Posterior vena cava (tissue), 2 donors: ENCODE measurements at regions of chr7 and their contacts with region 1.

Region 1: DNA sequence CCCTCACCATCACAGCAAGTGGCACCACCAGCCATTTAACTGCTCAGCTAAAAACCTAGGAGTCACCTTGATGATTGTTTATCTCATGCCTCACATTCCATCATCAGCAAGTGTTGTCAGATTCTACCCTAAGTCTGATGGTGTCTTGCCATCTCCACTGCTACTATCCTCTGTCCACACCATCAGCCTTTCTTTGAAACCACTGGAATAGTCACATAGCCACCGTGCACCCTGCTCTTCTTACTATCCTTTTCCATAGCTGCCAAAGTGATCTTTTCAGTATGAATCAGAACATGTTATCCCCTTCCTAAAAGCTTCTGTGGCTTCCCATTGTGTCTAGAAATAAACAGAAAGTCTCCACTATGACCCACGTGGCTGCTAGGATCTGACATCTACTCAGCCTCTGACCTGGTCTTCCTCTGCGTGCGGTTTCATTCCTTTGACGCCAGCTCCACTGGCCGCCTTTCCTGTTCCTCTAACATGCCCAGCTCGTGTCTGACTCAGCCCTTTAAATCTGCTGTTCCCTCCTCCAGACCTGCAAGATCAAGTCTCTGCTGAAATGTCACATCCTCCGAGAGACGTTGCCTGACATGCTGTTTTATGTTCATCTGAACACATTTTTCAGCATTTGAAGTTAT is 16.5 kb upstream of the CHN2 start:
- DNase-seq: peak; percentile 86

Region 2: DNA sequence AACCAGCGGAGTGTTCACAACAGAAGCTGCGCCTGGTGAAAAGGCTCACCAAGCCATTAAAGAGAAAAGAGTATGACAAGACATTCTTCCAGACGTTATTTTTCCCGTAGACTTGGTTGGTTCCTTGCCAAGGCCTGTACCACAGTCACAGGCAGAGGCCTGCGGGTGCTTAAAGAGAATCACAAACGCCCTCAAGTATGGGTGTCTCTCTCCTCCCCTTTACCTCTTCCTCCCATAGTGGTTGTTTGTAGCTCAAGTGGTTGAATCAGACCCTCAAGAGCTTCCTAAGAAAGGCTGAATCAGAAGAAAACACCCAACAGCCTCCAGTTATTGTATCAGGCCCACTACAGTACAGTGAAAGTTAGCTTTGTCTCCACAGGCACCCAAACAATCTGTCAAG is 596.7 kb before region 1 on chr7:
- intact Hi-C with region 1: no loop called
- DNase-seq: no peak

Region 3: GRCh38 chr7:29230829-29231345 is 52.8 kb after region 1 on chr7:
- intact Hi-C with region 1: loop called in 1 of 2 experiments (anchors 2 kb)
- DNase-seq: no peak

Region 4: GRCh38 chr7:29488977-29489376 is 310.9 kb after region 1 on chr7:
- intact Hi-C with region 1: no loop called
- DNase-seq: no peak